Tibial artery (tissue), 4 donors: ENCODE measurements at regions of chr7 and their contacts with region 1.

Region 1: GRCh38 chr7:92621026-92621540 is 30.9 kb upstream of the FAM133B start:
- DNase-seq: peak; percentile 30 to 76
- H3K4me3 ChIP-seq: no peak overlapping the region
- H3K27ac ChIP-seq: peak overlapping the region; percentile 51 to 67
- H3K4me1 ChIP-seq: peaks cover 0 to 20% (median 13%) of the 10 kb centered on the region in 4 donors
- H3K27me3 ChIP-seq: no peaks in the 10 kb centered on the region
- CTCF ChIP-seq: peak; percentile 76 to 82

Region 2: DNA sequence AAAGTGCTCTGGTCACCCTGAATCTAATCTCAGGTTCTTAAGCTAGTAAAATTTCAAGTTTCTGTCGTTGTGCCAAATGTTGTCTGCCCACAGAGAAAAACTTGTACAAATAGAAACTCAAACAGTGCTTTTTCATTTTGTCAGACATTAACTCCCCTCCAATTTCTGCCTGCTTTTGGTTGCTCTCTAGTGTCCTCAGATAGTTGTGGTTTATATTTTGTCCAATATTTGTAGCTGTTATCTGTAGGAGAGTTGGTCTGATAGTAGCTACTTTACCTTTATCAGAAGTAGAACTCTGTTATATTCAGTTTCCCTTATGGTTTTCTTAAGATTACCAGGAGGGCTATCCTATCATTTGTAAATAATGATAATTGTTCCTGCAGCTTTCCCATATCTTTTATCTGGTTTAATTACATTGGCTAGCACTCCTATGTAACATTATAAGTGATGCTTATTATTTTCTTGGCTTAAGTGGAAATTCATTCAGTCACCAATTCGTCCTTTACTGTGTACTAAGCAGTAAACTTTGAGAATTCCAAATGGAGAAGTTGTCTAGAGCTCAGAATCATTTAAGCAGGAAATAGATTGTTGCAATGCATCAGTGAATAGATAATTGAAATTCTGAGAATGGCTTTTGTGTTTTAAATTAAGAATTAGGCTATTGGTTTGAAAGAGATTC is 284.3 kb before region 1 on chr7:
- intact Hi-C with region 1: no loop called
- DNase-seq: no peak
- H3K4me3 ChIP-seq: no peak overlapping the region
- H3K27ac ChIP-seq: no peak overlapping the region
- H3K4me1 ChIP-seq: no peaks in the 10 kb centered on the region
- H3K27me3 ChIP-seq: no peaks in the 10 kb centered on the region
- CTCF ChIP-seq: no peak

Region 3: DNA sequence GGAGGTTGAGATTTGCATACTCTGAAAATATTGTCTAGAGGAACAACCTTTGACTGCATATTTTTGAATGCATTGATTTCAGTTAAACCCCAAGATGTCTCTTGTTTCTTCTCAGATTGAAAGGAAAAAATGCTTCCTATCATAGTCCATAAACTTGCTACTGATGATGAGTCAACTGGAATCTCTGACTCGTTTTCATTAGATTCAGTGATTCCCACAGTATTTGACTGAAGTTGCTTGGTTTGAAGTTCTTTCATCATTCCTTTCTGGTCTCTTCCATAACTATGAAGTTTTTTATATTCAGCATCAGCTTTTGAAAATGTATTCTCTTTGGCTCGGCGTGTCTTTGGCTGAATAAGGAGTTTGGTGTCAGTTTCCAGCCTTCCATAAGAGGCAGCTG is 103.5 kb before region 1 on chr7:
- intact Hi-C with region 1: no loop called
- DNase-seq: no peak
- H3K4me3 ChIP-seq: no peak overlapping the region
- H3K27ac ChIP-seq: no peak overlapping the region
- H3K4me1 ChIP-seq: no peaks in the 10 kb centered on the region
- H3K27me3 ChIP-seq: no peaks in the 10 kb centered on the region
- CTCF ChIP-seq: no peak

Region 4: DNA sequence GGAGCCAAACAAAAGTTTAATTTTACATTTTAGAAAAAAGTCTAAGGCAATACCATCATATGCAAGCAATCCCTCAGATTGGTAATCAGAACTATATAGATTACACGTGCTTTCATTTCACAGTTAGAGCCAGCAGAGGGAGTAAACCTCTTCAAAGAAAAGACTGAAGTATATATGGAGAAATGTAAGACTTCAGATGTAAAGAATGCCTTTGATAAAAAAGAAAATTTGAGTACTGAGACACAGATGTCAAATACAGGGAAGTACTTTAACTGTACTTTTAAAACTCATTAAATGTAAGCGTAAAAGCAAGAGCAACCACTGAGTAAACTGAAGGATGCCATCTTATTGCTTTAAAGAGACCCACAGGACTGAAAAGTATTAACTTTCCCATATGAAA is 70.5 kb after region 1 on chr7:
- intact Hi-C with region 1: loop called (anchors 10 kb)
- DNase-seq: no peak
- H3K4me3 ChIP-seq: no peak overlapping the region
- H3K27ac ChIP-seq: no peak overlapping the region
- H3K4me1 ChIP-seq: peaks cover 0 to 14% (median 0%) of the 10 kb centered on the region in 4 donors
- H3K27me3 ChIP-seq: no peaks in the 10 kb centered on the region
- CTCF ChIP-seq: peak; percentile 41 to 54